Activated CD4-positive, alpha-beta memory T cell treated with anti-CD3 and anti-CD28 coated beads for 36 hours (primary cell): ENCODE measurements at regions of chr14 and their contacts with region 1.

Region 1: GRCh38 chr14:66649498-66649897 is 141.6 kb downstream of the GPHN start:
- DNase-seq: peak; percentile 50
- H3K4me3 Mint-ChIP-seq: no peak overlapping the region
- H3K27ac Mint-ChIP-seq: peak overlapping the region; percentile 50
- H3K4me1 Mint-ChIP-seq: peaks cover 18% of the 10 kb centered on the region
- H3K27me3 Mint-ChIP-seq: no peaks in the 10 kb centered on the region

Region 2: DNA sequence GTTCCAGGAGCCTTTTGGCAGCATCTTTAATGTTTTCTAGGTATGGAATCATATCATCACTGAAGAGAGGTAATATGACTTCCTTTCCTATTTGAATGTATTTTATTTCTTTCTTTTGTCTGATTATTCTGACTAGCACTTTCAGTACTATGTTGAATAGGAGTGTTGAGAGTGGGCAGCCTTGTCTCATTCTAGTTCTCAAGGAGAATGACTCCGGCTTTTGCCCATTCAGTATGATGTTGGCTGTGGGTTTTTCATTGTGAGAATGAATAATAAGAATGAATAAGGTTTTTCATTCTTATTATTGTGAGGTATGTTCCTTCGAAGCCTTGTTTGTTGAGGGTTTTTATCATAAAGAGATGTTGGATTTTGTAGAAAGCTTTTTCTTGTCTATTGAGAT is 42.7 kb before region 1 on chr14:
- CTCF ChIA-PET with region 1: interaction called, 3 read pairs
- POLR2A ChIA-PET with region 1: no interaction called
- intact Hi-C with region 1: loop called (anchors 1 kb)
- DNase-seq: no peak
- H3K4me3 Mint-ChIP-seq: no peak overlapping the region
- H3K27ac Mint-ChIP-seq: no peak overlapping the region
- H3K4me1 Mint-ChIP-seq: peaks cover 41% of the 10 kb centered on the region
- H3K27me3 Mint-ChIP-seq: no peaks in the 10 kb centered on the region